Dendritic cell treated with granulocyte-macrophage colony-stimulating factor and Interleukin-4, amounts not matched to agents 40 ng/mL and 50 ng/mL, for 4 days (primary cell): ENCODE measurements at regions of chr11 and their contacts with region 1.

Region 1: GRCh38 chr11:65251476-65251875 is 10.3 kb upstream of the POLA2 start:
- H3K4me3 Mint-ChIP-seq: no peak overlapping the region
- H3K27ac Mint-ChIP-seq: no peak overlapping the region
- H3K4me1 Mint-ChIP-seq: no peaks in the 10 kb centered on the region
- H3K27me3 Mint-ChIP-seq: peaks cover 1% of the 10 kb centered on the region

Region 2: DNA sequence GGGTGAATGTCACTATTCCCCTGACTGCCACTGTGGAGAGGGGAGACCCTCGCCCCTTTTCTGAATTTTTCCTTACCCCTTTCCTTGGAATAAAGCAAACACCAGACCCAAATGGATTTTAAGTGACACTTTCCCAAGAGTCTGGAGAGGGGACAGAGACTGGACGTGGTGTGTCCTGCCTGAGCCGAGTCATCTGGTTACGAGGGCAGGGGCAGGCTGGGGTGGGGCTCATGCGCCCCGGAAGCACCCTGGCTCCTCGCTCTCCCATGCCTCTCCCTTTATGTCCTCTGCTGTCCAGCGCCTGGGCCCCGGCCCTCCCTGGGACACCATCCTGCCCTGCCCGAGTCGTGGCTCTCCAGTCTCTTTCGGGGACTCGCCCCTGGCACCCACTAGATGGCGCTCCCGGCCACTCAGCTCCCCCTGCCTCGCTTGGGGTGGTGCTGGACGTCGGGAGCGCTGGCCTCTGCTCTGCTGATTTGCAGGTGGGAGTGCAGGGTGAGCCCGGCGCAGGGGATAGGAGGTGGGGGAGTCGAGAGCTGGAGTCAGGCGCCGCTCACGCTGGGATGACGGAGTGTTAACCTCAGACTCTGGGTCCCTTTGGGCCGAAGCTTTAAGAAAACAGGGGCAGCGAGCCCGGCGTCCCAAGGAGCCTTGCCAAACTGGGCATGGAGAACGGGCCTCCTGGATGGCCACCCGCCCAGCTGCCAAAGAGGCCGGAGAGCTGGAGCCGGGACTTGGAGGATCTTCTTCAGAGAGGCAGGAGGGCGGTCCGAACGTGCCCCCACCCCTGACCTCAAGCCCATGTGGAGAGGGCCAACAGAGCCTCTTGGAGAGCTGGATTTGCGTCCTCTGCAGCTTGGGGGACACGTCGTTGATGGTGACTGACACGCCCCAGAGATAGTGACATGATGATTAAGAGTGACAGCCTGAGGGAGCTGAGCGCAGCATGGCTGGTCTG is 802.6 kb before region 1 on chr11:
- intact Hi-C with region 1: no loop called
- H3K4me3 Mint-ChIP-seq: peak overlapping the region; percentile 77
- H3K27ac Mint-ChIP-seq: peak overlapping the region; percentile 93
- H3K4me1 Mint-ChIP-seq: peaks cover 60% of the 10 kb centered on the region
- H3K27me3 Mint-ChIP-seq: no peaks in the 10 kb centered on the region

Region 3: DNA sequence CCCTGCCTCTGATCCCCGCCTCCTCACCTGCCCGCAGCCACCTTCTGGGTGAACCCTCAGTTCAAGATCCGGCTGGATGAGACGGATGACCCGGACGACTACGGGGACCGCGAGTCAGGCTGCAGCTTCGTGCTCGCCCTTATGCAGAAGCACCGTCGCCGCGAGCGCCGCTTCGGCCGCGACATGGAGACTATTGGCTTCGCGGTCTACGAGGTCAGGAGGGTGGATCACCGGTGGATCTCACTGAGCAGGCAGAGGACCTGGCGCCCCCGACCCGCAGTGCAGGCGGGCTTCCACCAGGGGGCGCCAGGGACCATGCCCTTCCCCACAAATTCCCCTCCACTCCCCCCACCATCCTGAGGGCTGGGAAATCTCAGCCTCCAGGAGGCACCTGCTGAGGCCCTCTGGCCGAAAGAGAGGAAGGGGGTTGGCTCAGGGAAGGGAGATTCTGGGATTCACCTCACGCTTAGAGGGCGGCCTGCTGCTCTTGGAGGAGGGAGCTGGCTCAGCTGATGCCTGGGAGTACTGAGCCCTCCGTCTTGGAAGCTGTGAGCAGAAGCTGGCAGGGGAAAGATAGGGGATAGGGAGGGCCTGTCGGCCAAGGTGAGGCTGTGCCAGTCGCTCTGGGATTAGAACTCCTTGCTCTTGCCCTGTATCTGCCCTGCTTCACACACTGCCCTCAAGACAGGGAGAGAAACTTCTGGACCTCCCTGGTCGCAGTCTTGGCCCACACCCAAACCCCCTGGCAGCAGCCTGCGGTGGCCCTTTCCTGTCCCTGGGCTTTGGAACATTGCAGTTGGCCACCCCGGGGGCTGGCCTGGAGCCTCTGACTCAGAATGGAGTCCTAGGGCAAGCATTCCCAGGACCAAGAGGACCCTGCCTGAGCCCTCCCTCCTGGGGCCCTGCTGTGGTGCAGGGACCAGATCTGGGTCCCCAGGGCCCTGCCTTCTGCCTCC is 46.6 kb before region 1 on chr11:
- intact Hi-C with region 1: loop called (anchors 5 kb)
- H3K4me3 Mint-ChIP-seq: no peak overlapping the region
- H3K27ac Mint-ChIP-seq: no peak overlapping the region
- H3K4me1 Mint-ChIP-seq: peaks cover 25% of the 10 kb centered on the region
- H3K27me3 Mint-ChIP-seq: no peaks in the 10 kb centered on the region